WTC11 (cell line): ENCODE measurements at regions of chr16 and their contacts with region 1.

Region 1: DNA sequence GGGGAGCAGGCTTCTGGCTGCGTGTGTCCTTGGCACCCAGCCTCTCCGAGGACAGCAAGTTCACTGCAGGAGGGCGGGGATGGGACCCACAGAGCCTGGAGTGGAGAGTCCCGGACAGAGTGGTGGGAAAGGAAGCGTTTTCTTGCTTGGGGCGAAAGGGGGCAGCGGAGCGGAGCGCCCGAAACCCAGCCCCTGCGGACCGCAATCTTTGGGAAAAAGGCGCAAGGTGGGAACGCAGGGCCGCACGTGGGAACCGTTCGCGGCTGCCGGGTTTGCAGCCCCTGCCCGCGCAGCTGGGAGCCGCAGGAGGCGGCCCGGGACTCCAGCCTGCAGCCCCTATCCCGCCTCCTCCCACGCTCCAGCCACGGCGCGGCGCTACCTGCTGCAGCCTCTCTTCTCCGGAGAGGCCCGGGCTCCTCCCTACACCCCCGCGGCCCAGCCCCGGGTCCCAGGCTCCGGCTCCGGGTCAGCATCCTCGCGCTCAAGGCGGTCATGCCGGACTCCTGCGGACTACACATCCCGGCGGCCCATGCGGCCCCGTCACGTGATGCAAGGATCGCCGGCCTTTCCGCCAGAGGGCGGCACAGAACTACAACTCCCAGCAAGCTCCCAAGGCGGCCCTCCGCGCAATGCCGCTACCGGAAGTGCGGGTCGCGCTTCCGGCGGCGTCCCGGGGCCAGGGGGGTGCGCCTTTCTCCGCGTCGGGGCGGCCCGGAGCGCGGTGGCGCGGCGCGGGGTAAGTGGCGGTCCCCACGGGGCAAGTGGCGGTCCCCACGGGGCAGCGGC is at the starts of genes NTHL1 and TSC2:
- DNase-seq: peak; percentile 99
- ATAC-seq: peak; percentile 95
- H3K4me3 Mint-ChIP-seq: peak within 1 kb of the TSS; percentile 91
- H3K27ac Mint-ChIP-seq: peak within 1 kb of the TSS; percentile 54
- H3K4me1 Mint-ChIP-seq: peaks cover 10% of the 10 kb centered on the region
- H3K27me3 Mint-ChIP-seq: no peaks in the 10 kb centered on the region
- CTCF ChIP-seq: no peak
- total RNA-seq, gene NTHL1: 90.5 to 93.4 TPM (median 93.3 TPM) in 3 replicates
- total RNA-seq, gene TSC2: 103 to 134 TPM (median 117 TPM) in 3 replicates

Region 2: DNA sequence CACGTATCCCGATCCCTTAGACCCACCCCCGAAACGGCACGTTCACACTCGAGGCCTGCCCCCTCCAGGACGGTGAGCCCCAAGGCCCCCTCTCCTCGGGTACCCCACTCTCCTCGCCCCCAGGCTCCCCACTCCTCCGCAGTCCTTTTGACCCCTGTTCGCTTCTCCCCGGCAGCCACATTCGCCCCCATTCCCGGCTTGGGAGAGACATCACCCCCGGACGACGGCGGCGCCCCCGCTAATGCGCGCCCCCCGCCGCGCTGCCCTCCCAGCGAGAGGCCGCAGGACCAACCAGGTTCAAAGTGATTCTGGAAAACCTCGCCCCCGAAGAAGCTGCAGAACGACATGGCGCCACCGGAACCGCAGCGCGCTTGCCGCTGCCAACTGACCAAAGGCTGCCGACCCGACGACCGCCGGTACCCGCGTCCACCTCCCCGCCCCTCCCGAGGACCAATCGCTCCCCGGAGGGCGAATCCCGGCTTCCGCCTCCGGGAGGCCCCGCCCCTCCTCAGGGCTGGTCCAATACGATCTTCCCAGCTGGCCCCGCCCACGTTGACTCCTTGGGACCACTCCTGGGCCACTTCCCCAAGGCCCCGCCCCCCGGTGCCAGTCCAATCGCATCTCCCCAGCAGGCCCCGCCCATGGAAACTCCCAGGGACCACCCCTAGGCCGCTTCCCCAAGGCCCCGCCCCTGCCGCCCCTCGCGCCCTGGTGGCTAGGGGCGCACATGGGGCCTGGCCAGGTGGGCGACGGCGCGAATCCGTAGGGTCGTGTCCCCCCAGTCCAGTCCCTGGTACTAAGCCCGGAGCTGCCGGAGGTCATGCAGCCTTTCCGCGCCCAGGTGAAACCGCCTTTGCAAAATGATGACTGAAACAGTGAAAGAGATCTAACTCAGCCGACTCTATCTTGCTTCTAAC is 104.5 kb before region 1 on chr16 and contains the start of gene MSRB1:
- CTCF ChIA-PET with region 1: no interaction called
- POLR2A ChIA-PET with region 1: no interaction called
- DNase-seq: peak; percentile 100
- ATAC-seq: peak; percentile 97
- H3K4me3 Mint-ChIP-seq: peak within 1 kb of the TSS; percentile 87
- H3K27ac Mint-ChIP-seq: peak within 1 kb of the TSS; percentile 60
- H3K4me1 Mint-ChIP-seq: peaks cover 22% of the 10 kb centered on the region
- H3K27me3 Mint-ChIP-seq: peaks cover 16% of the 10 kb centered on the region
- CTCF ChIP-seq: no peak
- total RNA-seq, gene MSRB1: 26.4 to 29.8 TPM (median 28.3 TPM) in 3 replicates

Region 3: DNA sequence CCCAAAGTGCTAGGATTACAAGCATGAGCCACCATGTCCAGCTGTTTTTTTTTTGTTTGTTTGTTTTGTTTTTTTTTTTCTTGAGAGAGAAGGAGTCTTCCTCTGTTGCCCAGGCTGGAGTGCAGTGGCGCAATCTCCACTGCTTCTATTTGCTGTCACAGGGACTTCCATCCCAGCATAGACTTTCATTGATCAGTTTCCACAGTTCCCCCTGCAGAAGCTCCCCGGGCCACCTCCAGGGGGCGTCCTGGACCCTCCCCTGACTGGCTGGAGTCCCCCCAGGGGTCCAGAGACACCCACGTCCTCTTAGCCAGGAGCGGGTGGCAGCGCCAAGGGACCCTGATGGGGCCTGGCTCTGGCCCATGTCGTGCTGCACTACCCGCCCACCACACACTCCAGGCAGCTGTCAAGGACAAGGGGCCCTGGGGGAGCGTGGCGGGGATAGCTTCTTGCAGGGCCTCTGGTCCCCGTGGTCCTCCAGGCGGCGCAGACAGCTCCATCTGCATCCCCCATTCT is 31.1 kb before region 1 on chr16:
- CTCF ChIA-PET with region 1: interaction called, 20 read pairs
- POLR2A ChIA-PET with region 1: no interaction called
- DNase-seq: peak; percentile 66
- ATAC-seq: peak; percentile 17
- H3K4me3 Mint-ChIP-seq: no peak overlapping the region
- H3K27ac Mint-ChIP-seq: no peak overlapping the region
- H3K4me1 Mint-ChIP-seq: peaks cover 2% of the 10 kb centered on the region; the same call in 1 of the 2 replicates
- H3K27me3 Mint-ChIP-seq: peaks cover 53% of the 10 kb centered on the region
- CTCF ChIP-seq: peak; percentile 60; the same call in 1 of the 2 replicates

Region 4: GRCh38 chr16:2090777-2091546 is 43.4 kb after region 1 on chr16:
- CTCF ChIA-PET with region 1: interaction called, 17 read pairs
- POLR2A ChIA-PET with region 1: interaction called, 3 read pairs
- DNase-seq: peak; percentile 95
- ATAC-seq: peak; percentile 84
- H3K4me3 Mint-ChIP-seq: peak overlapping the region; percentile 55
- H3K27ac Mint-ChIP-seq: no peak overlapping the region
- H3K4me1 Mint-ChIP-seq: no peaks in the 10 kb centered on the region
- H3K27me3 Mint-ChIP-seq: no peaks in the 10 kb centered on the region
- CTCF ChIP-seq: no peak